Activated T-helper 1 cell treated with anti-CD3 and anti-CD28 coated beads, Interleukin-12 subunit alpha, Interleukin-12 subunit beta, Interleukin-2, Interleukin-4 antibody, amounts not matched to agents 30 ng/mL and 10 ng/mL and 1 ng/mL, durations not matched to agents 14 hours and 24 hours and 36 hours (primary cell): ENCODE measurements at regions of chr9 and their contacts with region 1.

Region 1: DNA sequence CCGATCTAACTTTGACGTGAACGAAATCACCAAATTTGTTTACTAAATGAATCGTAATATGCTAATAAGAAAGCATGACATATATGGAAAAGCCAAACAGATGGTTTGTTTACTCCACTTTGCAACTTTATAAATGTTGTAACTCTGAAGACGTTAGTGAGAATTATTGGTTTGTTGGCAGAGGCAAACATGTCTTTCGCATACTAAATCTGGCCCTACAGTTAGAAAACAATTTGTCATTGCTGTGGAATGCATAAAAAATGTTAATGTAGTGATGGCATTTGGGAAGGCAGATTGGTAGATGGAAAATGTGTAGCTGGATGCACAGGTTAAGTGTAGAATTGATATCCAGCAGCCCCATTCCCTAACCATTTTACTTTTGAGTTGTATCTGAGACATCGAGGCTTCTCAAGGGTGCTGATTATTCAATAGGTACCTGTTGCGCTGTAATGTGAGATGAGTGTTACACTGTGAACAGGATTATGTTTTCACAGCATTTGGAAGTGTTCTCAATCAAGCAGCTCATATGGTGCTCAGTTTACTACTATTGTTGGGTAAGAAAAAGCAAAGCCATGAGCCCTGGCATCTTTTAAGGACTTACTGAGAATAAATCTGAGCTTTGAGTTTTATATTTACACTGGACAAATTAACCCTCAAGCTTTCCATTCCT is 444.8 kb downstream of the BNC2 start:
- DNase-seq: no peak
- H3K4me3 Mint-ChIP-seq: no peak overlapping the region
- H3K27ac Mint-ChIP-seq: no peak overlapping the region
- H3K4me1 Mint-ChIP-seq: no peaks in the 10 kb centered on the region
- H3K27me3 Mint-ChIP-seq: no peaks in the 10 kb centered on the region

Region 2: DNA sequence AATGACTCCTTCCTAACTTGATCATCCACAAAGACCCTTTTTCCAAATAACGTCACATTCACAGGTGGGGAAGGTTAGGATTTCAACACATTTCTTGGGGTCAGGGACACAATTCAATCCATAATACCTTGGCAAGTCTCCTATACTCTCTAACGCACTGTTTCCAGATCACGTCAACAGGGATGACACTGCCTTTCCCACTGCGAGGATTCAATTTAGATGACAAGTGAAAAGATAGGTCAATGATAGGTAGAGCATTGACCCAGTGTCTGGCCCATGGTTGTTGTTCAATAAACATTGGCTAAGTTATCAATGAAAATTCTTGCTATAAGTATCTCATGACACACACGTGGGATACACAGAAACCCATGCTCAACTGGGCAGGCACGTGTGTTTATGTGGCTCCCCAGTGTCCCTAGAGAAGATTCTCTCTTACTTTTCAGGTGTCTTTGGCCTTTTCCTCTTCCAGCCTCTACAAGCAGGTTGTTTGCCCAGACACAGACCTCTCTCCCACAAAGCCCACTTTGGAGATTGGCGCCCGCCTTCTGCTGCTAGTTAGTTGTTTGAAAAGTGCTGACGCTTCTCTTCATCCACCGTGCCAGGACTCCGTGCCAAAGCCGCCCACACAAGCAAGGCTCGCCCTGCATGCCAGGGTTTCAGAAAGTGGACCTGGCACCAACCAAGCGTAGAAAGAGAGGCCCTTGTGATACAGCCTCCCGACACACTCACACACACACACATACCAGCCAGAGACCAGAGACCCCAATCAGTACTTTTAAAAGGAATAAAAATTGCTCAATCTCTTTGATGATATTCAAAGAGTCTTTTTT is 149.7 kb before region 1 on chr9:
- intact Hi-C with region 1: no loop called
- DNase-seq: no peak
- H3K4me3 Mint-ChIP-seq: no peak overlapping the region
- H3K27ac Mint-ChIP-seq: no peak overlapping the region
- H3K4me1 Mint-ChIP-seq: no peaks in the 10 kb centered on the region
- H3K27me3 Mint-ChIP-seq: no peaks in the 10 kb centered on the region

Region 3: DNA sequence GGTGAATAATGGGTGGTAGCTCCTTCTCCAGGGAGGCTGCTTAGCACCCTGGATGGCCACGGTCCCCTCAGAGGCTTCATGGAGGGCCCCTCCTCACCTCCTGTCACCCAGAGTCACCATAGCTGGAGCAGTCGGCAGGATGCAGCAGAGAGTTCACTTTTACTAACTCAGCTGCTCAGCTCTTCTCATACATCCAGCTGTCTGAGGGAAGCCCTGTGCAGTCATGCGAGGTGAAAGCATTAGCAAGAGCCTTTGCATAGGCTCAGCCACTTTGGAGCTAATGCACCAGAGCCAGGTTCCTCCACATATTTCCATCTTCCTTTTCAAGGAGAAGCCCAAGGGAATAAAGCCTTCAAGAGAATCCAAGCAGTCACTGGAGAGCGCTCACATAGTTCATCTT is 54.4 kb before region 1 on chr9:
- intact Hi-C with region 1: loop called (anchors 10 kb)
- DNase-seq: no peak
- H3K4me3 Mint-ChIP-seq: no peak overlapping the region
- H3K27ac Mint-ChIP-seq: no peak overlapping the region
- H3K4me1 Mint-ChIP-seq: no peaks in the 10 kb centered on the region
- H3K27me3 Mint-ChIP-seq: no peaks in the 10 kb centered on the region